Caco-2 (cell line): ENCODE measurements at regions of chr2 and their contacts with region 1.

Region 1: DNA sequence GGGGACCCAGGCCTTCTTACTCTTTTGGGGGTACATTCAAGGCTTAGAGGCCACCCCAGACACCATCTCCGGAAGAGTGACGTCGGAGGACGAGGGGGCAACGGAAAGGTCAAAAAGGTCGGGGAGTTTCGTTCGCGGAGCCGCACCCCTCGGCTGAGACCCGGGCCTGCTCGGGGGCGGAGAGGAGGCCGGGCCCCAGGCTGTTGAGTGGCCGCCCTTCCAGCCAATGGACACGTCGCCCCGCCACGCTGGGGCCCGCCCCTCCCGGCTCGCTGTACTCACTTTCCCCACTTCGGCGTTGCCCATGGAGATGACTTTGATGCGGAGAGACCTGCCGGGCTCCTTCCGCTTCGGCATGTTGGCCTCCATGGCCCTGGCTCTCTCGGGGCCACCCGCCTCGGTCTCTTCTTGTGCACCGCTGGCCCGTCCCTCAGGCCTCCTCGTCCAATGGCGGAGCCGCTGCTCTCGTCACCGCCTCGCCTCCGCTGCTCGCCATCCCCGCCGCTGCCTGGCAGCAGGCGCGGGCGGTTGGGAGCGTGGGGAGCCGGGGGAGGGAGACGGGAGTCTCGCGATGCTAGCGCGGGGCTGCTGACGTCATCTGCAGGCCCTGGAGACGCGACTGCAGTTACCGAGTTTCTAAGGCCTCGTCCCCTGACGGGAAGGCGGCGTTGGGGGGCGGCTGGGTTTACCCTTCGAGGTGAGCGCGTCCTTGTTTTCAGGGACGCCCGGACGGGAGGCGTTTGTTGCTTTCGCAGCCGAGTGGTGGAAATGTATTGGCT is at the start of gene DNAJC27:
- DNase-seq: peak; percentile 98
- H3K4me3 ChIP-seq: peak within 1 kb of the TSS; percentile 55
- H3K4me3 Mint-ChIP-seq: peak within 1 kb of the TSS; percentile 90
- H3K27ac Mint-ChIP-seq: peak within 1 kb of the TSS; percentile 98
- H3K4me1 ChIP-seq: no peaks in the 10 kb centered on the region
- H3K4me1 Mint-ChIP-seq: no peaks in the 10 kb centered on the region
- H3K27me3 ChIP-seq: no peaks in the 10 kb centered on the region
- H3K27me3 Mint-ChIP-seq: no peaks in the 10 kb centered on the region
- CTCF ChIP-seq: no peak
- total RNA-seq, gene DNAJC27: 5.1 and 6.1 TPM in 2 replicates

Region 2: DNA sequence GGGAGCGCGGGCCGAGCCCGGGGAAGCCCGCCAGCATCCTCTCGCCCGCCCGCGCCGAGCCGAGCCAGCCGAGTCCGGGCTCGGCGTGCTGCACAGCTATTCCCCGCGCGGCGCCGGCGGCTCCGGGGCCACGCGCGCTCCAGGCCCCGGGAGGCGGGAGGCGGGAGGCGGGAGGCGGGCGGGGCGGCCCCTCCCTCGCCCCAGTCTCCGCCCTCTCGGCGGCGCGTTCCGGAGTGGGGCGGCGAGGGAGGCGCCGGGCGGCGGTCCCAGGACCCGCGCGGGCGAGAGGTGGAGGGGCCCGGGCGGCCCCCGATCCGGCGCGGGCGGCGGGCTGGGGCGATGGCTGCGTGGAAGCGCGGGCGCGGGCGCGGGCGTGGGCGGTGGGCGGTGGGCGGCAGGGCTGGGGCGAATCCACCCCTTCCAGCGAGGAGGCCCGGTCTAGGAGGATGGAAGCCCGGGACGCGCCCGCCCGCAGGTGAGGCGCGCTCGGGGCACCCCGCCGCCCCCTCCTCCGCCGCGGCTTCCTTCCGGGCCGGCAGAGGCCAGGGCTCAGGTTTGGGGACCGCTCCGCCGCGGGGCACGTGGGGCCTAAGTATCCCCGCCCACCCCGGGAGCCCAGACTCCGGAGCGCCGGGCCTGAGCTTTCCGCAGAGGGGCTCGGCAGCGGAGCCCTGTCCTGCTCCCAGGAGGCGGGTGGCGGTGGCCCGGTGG is 51.5 kb before region 1 on chr2 and contains the start of gene ADCY3:
- CTCF ChIA-PET with region 1: no interaction called
- POLR2A ChIA-PET with region 1: no interaction called
- intact Hi-C with region 1: loop called (anchors 2 kb)
- DNase-seq: peak; percentile 60 to 65
- H3K4me3 ChIP-seq: peak within 1 kb of the TSS; percentile 66
- H3K4me3 Mint-ChIP-seq: peak within 1 kb of the TSS; percentile 89
- H3K27ac Mint-ChIP-seq: no peak within 1 kb of the TSS
- H3K4me1 ChIP-seq: peaks cover 6% of the 10 kb centered on the region; the same call in 1 of the 2 replicates
- H3K4me1 Mint-ChIP-seq: peaks cover 18% of the 10 kb centered on the region
- H3K27me3 ChIP-seq: no peaks in the 10 kb centered on the region
- H3K27me3 Mint-ChIP-seq: no peaks in the 10 kb centered on the region
- CTCF ChIP-seq: no peak
- total RNA-seq, gene ADCY3: 71.3 and 75.6 TPM in 2 replicates